ENCODE measurements at regions of chr1 and their contacts with region 1.

Region 1: GRCh38 chr1:121458291-121459048 is 273.7 kb downstream of the SRGAP2C start:
- DNase-seq: no peak
- ATAC-seq: no peak
- H3K4me3 ChIP-seq: no peak overlapping the region
- H3K27ac ChIP-seq: no peak overlapping the region
- H3K4me1 ChIP-seq: no peaks in the 10 kb centered on the region
- H3K27me3 ChIP-seq: no peaks in the 10 kb centered on the region
- CTCF ChIP-seq: no peak
- EP300 ChIP-seq: no peak
- POLR2A ChIP-seq: no peak
- RAD21 ChIP-seq: no peak

Region 2: GRCh38 chr1:121471523-121471922 is 13.1 kb after region 1 on chr1:
- CTCF ChIA-PET with region 1: no interaction called
- POLR2A ChIA-PET with region 1: no interaction called
- in situ Hi-C with region 1: no loop called
- intact Hi-C with region 1: no loop called
- DNase-seq: no peak
- ATAC-seq: no peak
- H3K4me3 ChIP-seq: no peak overlapping the region
- H3K27ac ChIP-seq: no peak overlapping the region
- H3K4me1 ChIP-seq: no peaks in the 10 kb centered on the region
- H3K27me3 ChIP-seq: no peaks in the 10 kb centered on the region
- CTCF ChIP-seq: no peak
- EP300 ChIP-seq: no peak
- POLR2A ChIP-seq: no peak
- RAD21 ChIP-seq: no peak

Region 3: GRCh38 chr1:121546830-121547591 is 88.5 kb after region 1 on chr1:
- CTCF ChIA-PET with region 1: no interaction called
- POLR2A ChIA-PET with region 1: no interaction called
- in situ Hi-C with region 1: no loop called
- intact Hi-C with region 1: loop called (anchors 10 kb)
- DNase-seq: no peak
- ATAC-seq: no peak
- H3K4me3 ChIP-seq: no peak overlapping the region
- H3K27ac ChIP-seq: no peak overlapping the region
- H3K4me1 ChIP-seq: no peaks in the 10 kb centered on the region
- H3K27me3 ChIP-seq: no peaks in the 10 kb centered on the region
- CTCF ChIP-seq: no peak
- EP300 ChIP-seq: no peak
- POLR2A ChIP-seq: no peak
- RAD21 ChIP-seq: no peak

Measured in K562 (cell line).